SK-MEL-5 (cell line): ENCODE measurements at regions of chr6 and their contacts with region 1.

Region 1: DNA sequence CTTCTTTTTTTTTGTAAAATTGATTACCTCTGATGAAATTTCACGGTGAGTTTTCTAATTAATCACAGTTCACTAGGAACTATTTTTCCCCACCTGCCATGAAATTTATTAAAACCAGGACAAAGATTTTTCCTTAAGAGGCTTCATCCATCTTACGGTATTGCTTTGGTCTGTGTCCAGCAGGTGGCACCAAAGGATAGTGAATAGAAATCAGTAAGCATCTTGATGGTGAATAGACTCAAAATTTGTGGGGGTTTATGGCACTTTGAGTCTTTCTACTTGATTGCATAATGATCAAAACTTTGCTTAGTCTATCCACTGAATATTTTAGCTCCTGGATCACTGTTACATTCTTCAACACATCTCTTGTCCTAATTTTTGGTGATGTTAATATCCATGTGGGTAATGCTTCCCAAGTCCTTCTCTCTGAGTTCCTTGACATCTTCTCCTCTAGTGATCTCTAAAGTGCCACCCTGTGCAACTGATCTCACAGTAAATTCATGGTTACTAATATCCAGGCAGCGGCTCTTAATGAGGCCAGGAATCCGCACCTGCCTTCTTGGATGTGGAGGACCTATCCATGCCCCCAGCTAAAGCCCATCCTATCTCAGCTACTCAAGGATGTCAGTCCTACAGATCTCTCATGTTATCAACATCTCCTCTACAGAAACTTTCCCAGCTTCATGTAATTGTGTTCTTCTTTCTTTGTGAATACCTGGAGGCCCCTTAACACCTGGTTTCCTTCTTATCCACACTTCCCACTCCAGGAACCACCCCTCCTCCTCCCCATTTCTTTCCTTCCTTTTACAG is 54.5 kb downstream of the STMND1 start:
- DNase-seq: peak; percentile 90

Region 2: DNA sequence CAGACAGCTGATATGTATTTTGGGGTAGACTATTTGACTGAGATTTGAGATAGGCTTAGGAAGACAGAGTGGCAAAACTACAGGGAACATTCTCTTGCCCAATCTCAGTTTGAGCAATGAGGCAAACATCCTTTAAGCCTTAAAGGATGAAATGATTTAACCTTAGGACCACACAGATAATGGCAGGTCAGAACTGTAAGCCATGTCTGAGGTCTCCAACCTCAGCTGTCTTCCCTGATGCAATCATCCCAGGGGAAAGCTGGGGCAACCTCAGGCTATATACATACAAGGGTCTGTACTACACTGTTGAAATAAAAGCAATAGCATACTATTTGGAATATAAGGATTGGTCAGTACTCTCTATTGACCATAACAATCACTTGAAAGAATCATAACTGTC is 634.2 kb after region 1 on chr6:
- in situ Hi-C with region 1: loop called (anchors 25 kb)
- DNase-seq: no peak